ENCODE measurements at regions of chr14 and their contacts with region 1.

Region 1: DNA sequence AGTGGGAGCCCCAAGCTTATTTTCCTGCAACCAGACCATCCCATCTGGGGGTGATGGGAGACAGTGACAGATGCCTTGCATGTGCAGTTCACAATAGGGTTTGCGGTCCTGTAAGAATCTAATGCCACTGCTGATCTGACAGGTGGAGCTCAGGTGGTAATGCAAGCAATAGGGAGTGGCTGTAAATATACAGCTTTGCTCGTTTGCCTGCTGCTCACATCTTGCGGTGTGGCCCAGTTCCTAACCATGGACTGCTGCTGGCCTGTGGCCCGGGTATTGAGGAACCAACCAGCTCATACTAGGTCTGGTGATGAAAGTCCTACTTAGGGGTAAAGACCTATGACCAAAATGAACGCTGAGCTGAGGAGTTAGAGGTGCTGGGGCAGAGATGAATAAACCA is 36.1 kb upstream of the CCDC88C start:
- DNase-seq: no peak
- ATAC-seq: no peak
- H3K4me3 Mint-ChIP-seq: no peak overlapping the region
- H3K27ac Mint-ChIP-seq: no peak overlapping the region
- H3K4me1 Mint-ChIP-seq: no peaks in the 10 kb centered on the region
- H3K27me3 Mint-ChIP-seq: no peaks in the 10 kb centered on the region
- CTCF ChIP-seq: no peak

Region 2: DNA sequence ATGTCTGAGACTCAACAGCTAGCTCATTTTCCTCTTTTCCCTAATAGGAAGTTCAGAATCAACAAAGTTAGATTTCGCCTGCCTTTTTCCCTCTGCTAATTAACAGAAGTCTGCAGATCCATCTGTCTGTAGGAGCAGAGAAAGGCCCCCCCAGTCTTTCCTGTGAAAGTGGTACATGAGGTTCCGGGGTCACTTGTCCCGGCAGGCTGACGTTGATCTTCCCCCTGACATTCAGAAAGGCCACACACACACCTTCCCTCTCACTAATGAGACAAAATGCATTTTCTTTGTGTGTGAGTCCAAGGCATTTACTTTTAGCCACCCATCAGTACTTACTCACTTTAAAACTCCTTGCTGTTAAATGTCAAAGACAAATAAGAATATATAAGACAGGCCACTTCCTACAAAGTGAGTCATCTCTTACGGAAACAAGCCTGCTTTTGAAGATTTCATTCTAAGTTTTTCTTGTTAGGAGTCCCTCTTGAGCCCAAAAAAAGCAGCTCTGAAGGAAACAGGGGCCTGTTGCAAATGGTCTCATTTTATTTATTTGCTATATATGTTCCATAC is 776.2 kb before region 1 on chr14:
- CTCF ChIA-PET with region 1: no interaction called
- POLR2A ChIA-PET with region 1: no interaction called
- intact Hi-C with region 1: no loop called
- DNase-seq: no peak
- ATAC-seq: no peak
- H3K4me3 Mint-ChIP-seq: no peak overlapping the region
- H3K27ac Mint-ChIP-seq: no peak overlapping the region
- H3K4me1 Mint-ChIP-seq: no peaks in the 10 kb centered on the region
- H3K27me3 Mint-ChIP-seq: no peaks in the 10 kb centered on the region
- CTCF ChIP-seq: no peak

Region 3: GRCh38 chr14:91047174-91047753 is 406.5 kb before region 1 on chr14:
- CTCF ChIA-PET with region 1: no interaction called
- POLR2A ChIA-PET with region 1: interaction called, 11 read pairs
- intact Hi-C with region 1: no loop called
- DNase-seq: no peak
- ATAC-seq: peak; percentile 21
- H3K4me3 Mint-ChIP-seq: peak overlapping the region; percentile 47
- H3K27ac Mint-ChIP-seq: peak overlapping the region; percentile 42
- H3K4me1 Mint-ChIP-seq: peaks cover 47% of the 10 kb centered on the region
- H3K27me3 Mint-ChIP-seq: no peaks in the 10 kb centered on the region
- CTCF ChIP-seq: no peak